Esophagus muscularis mucosa (tissue), 4 donors: ENCODE measurements at regions of chr1 and their contacts with region 1.

Region 1: DNA sequence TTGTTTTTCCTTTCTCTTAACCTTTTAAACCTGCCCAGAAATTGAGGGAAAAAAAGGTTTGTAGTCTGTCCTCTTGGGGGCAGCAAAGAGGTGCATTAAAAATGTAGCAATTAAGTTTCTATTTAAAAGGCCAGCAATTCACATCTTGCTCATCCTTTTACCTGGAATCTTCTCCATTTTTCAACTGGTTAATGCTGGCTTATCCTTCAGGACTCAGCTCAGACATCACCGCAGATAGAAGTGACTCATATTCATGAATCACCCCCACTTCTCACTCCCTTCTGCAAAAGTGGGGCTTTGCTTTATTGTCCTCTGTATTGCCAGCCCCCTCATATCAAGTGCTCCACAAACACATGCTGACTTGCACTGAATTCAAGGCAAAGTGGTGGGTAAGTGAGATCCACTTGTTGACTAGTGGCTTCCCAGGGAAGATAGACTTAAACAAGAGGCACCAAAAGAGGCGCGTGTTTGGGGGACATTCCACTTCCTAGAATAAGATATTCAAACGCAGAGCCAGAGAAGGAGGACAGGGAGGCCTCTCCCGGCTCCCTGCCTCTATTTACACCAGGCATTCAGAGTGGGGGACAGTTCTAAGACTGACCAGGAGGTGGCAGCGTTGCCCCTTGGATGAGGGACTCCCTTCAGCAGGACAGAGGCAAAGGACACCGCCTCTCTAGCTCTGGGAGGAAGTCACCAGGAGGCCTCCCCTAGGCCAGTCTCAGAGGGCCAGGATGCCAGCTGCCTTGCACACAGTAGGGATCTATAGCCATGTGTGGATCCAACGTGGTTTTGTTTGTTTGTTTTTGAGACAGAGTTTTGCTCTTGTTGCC is 23.2 kb upstream of the ZNF648 start:
- DNase-seq: peak; percentile 98
- H3K4me3 ChIP-seq: no peak overlapping the region
- H3K27ac ChIP-seq: peak overlapping the region; percentile 8 to 56 (median 42)
- H3K4me1 ChIP-seq: peaks cover 7 to 15% (median 12%) of the 10 kb centered on the region in 4 donors
- H3K27me3 ChIP-seq: no peaks in the 10 kb centered on the region
- CTCF ChIP-seq: peak; percentile 81 to 96 (median 91)
- EP300 ChIP-seq: no peak
- POLR2A ChIP-seq: no peak

Region 2: GRCh38 chr1:181479137-181479745 is 605.5 kb before region 1 on chr1:
- intact Hi-C with region 1: loop called (anchors 5 kb)
- DNase-seq: no peak
- H3K4me3 ChIP-seq: no peak overlapping the region
- H3K27ac ChIP-seq: no peak overlapping the region
- H3K4me1 ChIP-seq: peaks cover 5 to 28% (median 22%) of the 10 kb centered on the region in 4 donors
- H3K27me3 ChIP-seq: peaks cover 0 to 36% (median 24%) of the 10 kb centered on the region in 4 donors
- CTCF ChIP-seq: peak; percentile 76 to 84 (median 79)
- EP300 ChIP-seq: no peak
- POLR2A ChIP-seq: no peak

Region 3: DNA sequence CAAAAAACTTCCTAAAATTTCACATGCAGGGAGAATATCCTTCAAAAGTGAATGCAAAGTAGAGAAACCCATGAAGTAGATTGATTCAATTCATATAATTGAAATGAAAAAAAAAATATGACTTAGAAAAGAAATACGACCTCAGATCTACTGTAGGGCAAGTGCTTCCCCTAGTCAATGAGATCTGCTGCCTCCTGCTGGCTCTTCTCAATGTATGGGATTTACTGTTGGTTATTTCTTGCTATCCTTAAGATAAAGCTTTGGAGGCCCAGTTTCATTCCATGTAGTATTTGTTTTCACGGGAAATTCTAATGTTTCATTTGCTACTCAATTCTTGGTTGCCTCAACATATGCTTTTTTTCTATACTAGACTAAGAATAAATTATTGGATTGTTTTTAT is 69.3 kb before region 1 on chr1:
- intact Hi-C with region 1: no loop called
- DNase-seq: no peak
- H3K4me3 ChIP-seq: no peak overlapping the region
- H3K27ac ChIP-seq: no peak overlapping the region
- H3K4me1 ChIP-seq: no peaks in the 10 kb centered on the region
- H3K27me3 ChIP-seq: no peaks in the 10 kb centered on the region
- CTCF ChIP-seq: no peak
- EP300 ChIP-seq: no peak
- POLR2A ChIP-seq: no peak

Region 4: DNA sequence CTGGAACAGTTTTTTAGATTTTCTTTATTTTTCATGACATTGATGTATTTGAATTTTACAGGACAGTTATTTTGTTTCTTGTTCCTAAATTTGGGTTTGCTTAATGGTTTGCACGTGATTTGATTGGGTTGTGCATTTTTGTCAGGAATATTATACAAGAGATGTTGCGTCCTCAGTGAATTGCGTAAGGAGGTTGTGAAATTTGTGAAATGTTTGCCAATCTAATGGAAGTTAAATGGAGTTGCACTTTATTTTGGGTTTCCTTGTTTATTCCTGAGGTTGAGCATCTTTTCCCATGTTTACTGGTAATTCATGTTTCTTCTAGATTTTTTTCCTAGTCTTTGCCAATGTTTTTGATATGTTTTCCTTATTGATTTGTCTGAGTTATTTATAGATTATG is 43.1 kb before region 1 on chr1:
- intact Hi-C with region 1: no loop called
- DNase-seq: no peak
- H3K4me3 ChIP-seq: no peak overlapping the region
- H3K27ac ChIP-seq: no peak overlapping the region
- H3K4me1 ChIP-seq: no peaks in the 10 kb centered on the region
- H3K27me3 ChIP-seq: no peaks in the 10 kb centered on the region
- CTCF ChIP-seq: no peak
- EP300 ChIP-seq: no peak
- POLR2A ChIP-seq: no peak

Region 5: DNA sequence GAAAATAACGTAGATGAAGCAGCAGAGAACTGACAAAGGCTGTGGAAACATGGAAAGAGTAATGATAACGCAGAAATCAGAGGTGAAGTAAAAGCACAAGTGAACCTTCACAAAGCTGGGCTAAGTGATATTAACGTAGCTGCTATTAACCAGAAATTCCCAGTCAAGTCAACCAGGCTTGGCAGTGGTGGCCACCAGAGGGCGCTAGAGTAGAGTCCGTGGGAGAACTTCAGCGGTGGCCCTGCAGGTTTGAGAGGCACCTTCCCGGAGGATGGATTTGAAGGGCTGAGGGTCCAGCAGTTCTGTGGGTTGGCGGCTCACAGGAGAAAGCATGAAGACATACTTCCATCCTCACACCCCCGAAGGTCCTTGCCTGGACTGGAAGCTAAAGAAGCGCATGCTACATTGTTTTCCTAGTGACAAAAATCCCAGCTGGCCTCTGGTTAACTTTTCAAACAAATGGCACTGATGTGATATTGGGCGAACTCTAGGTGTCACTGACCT is 58.5 kb after region 1 on chr1:
- intact Hi-C with region 1: loop called (anchors 2 kb)
- DNase-seq: peak; percentile 99
- H3K4me3 ChIP-seq: peak overlapping the region in 1 of 4 donors; percentile 21
- H3K27ac ChIP-seq: peak overlapping the region; percentile 90 to 97 (median 95)
- H3K4me1 ChIP-seq: peaks cover 26 to 50% (median 41%) of the 10 kb centered on the region in 4 donors
- H3K27me3 ChIP-seq: no peaks in the 10 kb centered on the region
- CTCF ChIP-seq: peak; percentile 95 to 98 (median 97)
- EP300 ChIP-seq: no peak
- POLR2A ChIP-seq: no peak

Region 6: GRCh38 chr1:182279724-182280503 is 195.2 kb after region 1 on chr1:
- intact Hi-C with region 1: loop called (anchors 10 kb)
- DNase-seq: no peak
- H3K4me3 ChIP-seq: no peak overlapping the region
- H3K27ac ChIP-seq: no peak overlapping the region
- H3K4me1 ChIP-seq: peaks cover 0 to 5% (median 0%) of the 10 kb centered on the region in 4 donors
- H3K27me3 ChIP-seq: no peaks in the 10 kb centered on the region
- CTCF ChIP-seq: no peak
- EP300 ChIP-seq: no peak
- POLR2A ChIP-seq: no peak

Region 7: GRCh38 chr1:182397771-182398393 is 313.2 kb after region 1 on chr1:
- intact Hi-C with region 1: loop called (anchors 2 kb)
- DNase-seq: no peak
- H3K4me3 ChIP-seq: no peak overlapping the region
- H3K27ac ChIP-seq: no peak overlapping the region
- H3K4me1 ChIP-seq: peaks cover 19 to 41% (median 28%) of the 10 kb centered on the region in 4 donors
- H3K27me3 ChIP-seq: no peaks in the 10 kb centered on the region
- CTCF ChIP-seq: no peak
- EP300 ChIP-seq: no peak
- POLR2A ChIP-seq: no peak

Region 8: GRCh38 chr1:182595641-182596240 is 511.0 kb after region 1 on chr1:
- intact Hi-C with region 1: loop called (anchors 5 kb)
- DNase-seq: no peak
- H3K4me3 ChIP-seq: no peak overlapping the region
- H3K27ac ChIP-seq: peak overlapping the region in 1 of 4 donors; percentile 4
- H3K4me1 ChIP-seq: peaks cover 5 to 15% (median 12%) of the 10 kb centered on the region in 4 donors
- H3K27me3 ChIP-seq: no peaks in the 10 kb centered on the region
- CTCF ChIP-seq: peak; percentile 84 to 89 (median 86)
- EP300 ChIP-seq: no peak
- POLR2A ChIP-seq: no peak

Region 9: GRCh38 chr1:182781841-182782586 is 697.3 kb after region 1 on chr1:
- intact Hi-C with region 1: loop called (anchors 5 kb)
- DNase-seq: no peak
- H3K4me3 ChIP-seq: no peak overlapping the region
- H3K27ac ChIP-seq: no peak overlapping the region
- H3K4me1 ChIP-seq: peaks cover 0 to 5% (median 0%) of the 10 kb centered on the region in 4 donors
- H3K27me3 ChIP-seq: no peaks in the 10 kb centered on the region
- CTCF ChIP-seq: peak; percentile 60 to 71 (median 64)
- EP300 ChIP-seq: no peak
- POLR2A ChIP-seq: no peak